Heart left ventricle (tissue), 16 donors: ENCODE measurements at regions of chr3 and their contacts with region 1.

Region 1: DNA sequence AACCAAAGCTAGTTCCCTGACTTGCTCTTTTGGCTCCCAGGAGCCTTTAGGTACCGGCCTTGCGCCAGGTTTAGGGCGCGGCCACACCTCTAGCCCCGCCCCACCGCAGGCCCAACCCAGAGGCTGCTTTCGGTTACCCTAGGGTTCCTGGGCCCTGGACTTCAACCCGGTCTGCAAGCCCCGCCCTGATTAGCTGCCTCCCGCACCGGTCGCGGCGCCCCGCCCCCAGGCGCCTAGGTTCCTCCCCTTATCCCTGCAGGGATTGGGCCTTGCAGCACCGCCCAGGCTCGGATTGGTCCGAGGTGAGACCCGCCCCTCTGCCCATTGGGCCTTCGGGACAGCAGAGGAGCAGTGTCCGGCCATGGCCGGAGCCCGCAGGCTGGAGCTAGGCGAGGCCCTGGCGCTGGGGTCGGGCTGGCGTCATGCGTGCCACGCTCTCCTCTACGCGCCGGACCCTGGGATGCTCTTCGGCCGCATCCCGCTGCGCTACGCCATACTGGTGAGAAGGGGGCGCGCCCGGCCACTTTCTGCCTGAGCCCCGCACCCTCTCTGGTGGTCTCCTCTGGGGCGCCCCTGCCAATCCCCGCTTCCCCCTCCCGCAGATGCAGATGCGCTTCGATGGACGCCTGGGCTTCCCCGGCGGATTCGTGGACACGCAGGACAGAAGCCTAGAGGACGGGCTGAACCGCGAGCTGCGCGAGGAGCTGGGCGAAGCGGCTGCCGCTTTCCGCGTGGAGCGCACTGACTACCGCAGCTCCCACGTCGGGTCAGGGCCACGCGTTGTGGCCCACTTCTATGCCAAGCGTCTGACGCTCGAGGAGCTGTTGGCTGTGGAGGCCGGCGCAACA is at the start of gene NUDT16:
- DNase-seq: peak; percentile 100
- ATAC-seq: peak; percentile 98 to 99 (median 99)
- H3K4me3 ChIP-seq: peak within 1 kb of the TSS; percentile 68 to 96 (median 86)
- H3K27ac ChIP-seq: peak within 1 kb of the TSS; percentile 63 to 94 (median 92)
- H3K4me1 ChIP-seq: peaks cover 4 to 61% (median 34%) of the 10 kb centered on the region in 12 donors
- H3K27me3 ChIP-seq: no peaks in the 10 kb centered on the region
- CTCF ChIP-seq: peak in 4 of 12 donors; percentile 8 to 25 (median 18)
- POLR2A ChIP-seq: peak; percentile 83 to 97
- total RNA-seq, gene NUDT16: 27.6 to 49.6 (median 33.9) TPM

Region 2: GRCh38 chr3:131026321-131027178 is 355.1 kb before region 1 on chr3 and contains the starts of genes ASTE1 and NEK11:
- intact Hi-C with region 1: loop called in 3 of 10 experiments (anchors 5 to 10 kb)
- DNase-seq: peak; percentile 89 to 95 (median 92)
- ATAC-seq: peak; percentile 95 to 99 (median 99)
- H3K4me3 ChIP-seq: peak within 1 kb of the TSS; percentile 58 to 90 (median 68)
- H3K27ac ChIP-seq: peak within 1 kb of the TSS; percentile 57 to 93 (median 84)
- H3K4me1 ChIP-seq: peaks cover 0 to 50% (median 20%) of the 10 kb centered on the region in 12 donors
- H3K27me3 ChIP-seq: no peaks in the 10 kb centered on the region
- CTCF ChIP-seq: no peak
- POLR2A ChIP-seq: peak in 1 of 2 donors; percentile 51
- total RNA-seq, gene ASTE1: 1.9 to 5.7 (median 3.1) TPM
- total RNA-seq, gene NEK11: 1.5 to 4.3 (median 2.1) TPM

Region 3: GRCh38 chr3:131033480-131034080 is 348.1 kb before region 1 on chr3:
- intact Hi-C with region 1: loop called in 3 of 10 experiments (anchors 5 to 10 kb)
- DNase-seq: no peak
- ATAC-seq: no peak
- H3K4me3 ChIP-seq: no peak overlapping the region
- H3K27ac ChIP-seq: no peak overlapping the region
- H3K4me1 ChIP-seq: no peaks in the 10 kb centered on the region
- H3K27me3 ChIP-seq: no peaks in the 10 kb centered on the region
- CTCF ChIP-seq: peak; percentile 49 to 73 (median 62)
- POLR2A ChIP-seq: no peak

Region 4: GRCh38 chr3:131067983-131068382 is 313.7 kb before region 1 on chr3:
- intact Hi-C with region 1: loop called in 1 of 10 experiments (anchors 10 kb)
- DNase-seq: peak in 4 of 5 donors; percentile 36 to 69 (median 46)
- ATAC-seq: peak; percentile 42 to 61 (median 54)
- H3K4me3 ChIP-seq: no peak overlapping the region
- H3K27ac ChIP-seq: no peak overlapping the region
- H3K4me1 ChIP-seq: peaks cover 0 to 14% (median 6%) of the 10 kb centered on the region in 12 donors
- H3K27me3 ChIP-seq: no peaks in the 10 kb centered on the region
- CTCF ChIP-seq: no peak
- POLR2A ChIP-seq: no peak

Region 5: GRCh38 chr3:131142580-131142979 is 239.1 kb before region 1 on chr3:
- intact Hi-C with region 1: no loop called
- DNase-seq: no peak
- ATAC-seq: no peak
- H3K4me3 ChIP-seq: no peak overlapping the region
- H3K27ac ChIP-seq: no peak overlapping the region
- H3K4me1 ChIP-seq: no peaks in the 10 kb centered on the region
- H3K27me3 ChIP-seq: no peaks in the 10 kb centered on the region
- CTCF ChIP-seq: peak in 1 of 12 donors; percentile 19
- POLR2A ChIP-seq: no peak

Region 6: DNA sequence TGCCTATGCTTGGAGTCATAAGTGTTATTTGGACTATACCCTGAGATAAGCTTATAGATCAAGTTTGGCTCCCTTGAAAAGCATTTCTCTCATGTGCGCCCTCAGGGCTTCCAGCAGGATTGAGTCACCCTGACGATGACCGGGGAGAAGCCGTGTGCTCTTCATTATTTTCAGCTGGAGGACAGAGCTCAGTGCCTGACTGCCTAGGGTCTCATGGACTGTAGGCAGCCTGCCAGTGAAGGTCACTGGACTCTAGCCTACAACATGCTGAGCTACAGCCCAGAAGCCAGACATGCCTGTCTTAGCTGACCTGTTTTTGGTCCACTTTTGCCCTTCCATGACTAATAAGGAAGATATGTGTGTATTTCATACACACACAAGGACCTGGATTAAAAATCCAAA is 31.7 kb before region 1 on chr3:
- intact Hi-C with region 1: loop called in 1 of 10 experiments (anchors 1 kb)
- DNase-seq: peak in 4 of 5 donors; percentile 33 to 67 (median 42)
- ATAC-seq: peak; percentile 73 to 88 (median 78)
- H3K4me3 ChIP-seq: peak overlapping the region in 2 of 12 donors; percentile 17 to 31
- H3K27ac ChIP-seq: peak overlapping the region; percentile 51 to 91 (median 73)
- H3K4me1 ChIP-seq: peaks cover 0 to 45% (median 16%) of the 10 kb centered on the region in 12 donors
- H3K27me3 ChIP-seq: no peaks in the 10 kb centered on the region
- CTCF ChIP-seq: no peak
- POLR2A ChIP-seq: no peak

Region 7: DNA sequence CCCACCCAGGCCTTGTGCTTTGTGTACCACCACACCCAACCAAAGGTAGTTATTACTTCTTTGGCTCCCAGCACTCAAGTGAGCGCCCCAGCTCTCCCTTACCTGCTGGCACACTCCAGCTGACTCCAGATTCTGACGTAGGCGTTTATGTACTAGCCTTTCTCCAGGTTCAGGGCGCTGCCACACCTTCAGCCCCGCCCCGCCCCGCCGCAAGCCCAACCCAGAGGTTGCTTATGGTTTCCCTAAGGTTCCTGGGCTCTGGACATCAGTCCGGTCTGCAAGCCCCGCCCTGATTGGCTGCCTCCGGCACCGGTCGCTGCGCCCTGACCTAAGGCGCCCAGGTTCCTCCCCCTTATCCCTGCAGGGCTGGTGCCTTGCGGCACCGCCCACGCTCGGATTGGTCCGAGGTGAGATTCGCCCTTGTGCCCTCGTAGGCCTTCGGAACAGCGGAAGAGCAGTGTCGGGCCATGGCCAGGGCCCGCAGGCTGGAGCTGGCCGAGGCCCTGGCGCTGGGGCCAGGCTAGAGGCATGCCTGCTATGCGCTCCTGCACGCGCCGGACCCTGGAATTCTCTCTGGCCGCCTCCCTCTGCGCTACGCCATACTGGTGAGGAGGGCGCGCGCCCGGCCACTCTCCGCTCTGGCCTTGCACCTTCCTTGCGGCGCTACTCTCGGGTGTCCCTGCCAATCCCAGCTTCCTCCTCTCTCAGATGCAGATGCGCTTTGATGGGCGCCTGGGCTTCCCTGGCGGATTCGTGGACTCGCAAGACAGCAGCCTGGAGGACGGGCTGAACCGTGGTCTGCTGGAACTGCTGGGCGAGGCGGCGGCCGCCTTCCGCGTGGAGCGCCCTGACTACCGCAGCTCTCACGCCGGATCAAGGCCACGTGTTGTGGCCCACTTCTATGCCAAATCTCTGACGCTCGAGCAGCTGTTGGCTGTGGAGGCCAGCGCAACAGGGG is 19.9 kb before region 1 on chr3:
- intact Hi-C with region 1: no loop called
- DNase-seq: peak; percentile 83 to 93 (median 91)
- ATAC-seq: peak; percentile 93 to 97 (median 96)
- H3K4me3 ChIP-seq: peak overlapping the region; percentile 39 to 69 (median 58)
- H3K27ac ChIP-seq: peak overlapping the region; percentile 75 to 93 (median 84)
- H3K4me1 ChIP-seq: peaks cover 0 to 24% (median 6%) of the 10 kb centered on the region in 12 donors
- H3K27me3 ChIP-seq: no peaks in the 10 kb centered on the region
- CTCF ChIP-seq: peak in 1 of 12 donors; percentile 4
- POLR2A ChIP-seq: peak in 1 of 2 donors; percentile 57

Region 8: GRCh38 chr3:131454501-131454900 is 72.8 kb after region 1 on chr3:
- intact Hi-C with region 1: loop called in 1 of 10 experiments (anchors 5 kb)
- DNase-seq: no peak
- ATAC-seq: peak in 1 of 4 donors; percentile 21
- H3K4me3 ChIP-seq: no peak overlapping the region
- H3K27ac ChIP-seq: no peak overlapping the region
- H3K4me1 ChIP-seq: peaks cover 0 to 26% (median 0%) of the 10 kb centered on the region in 12 donors
- H3K27me3 ChIP-seq: no peaks in the 10 kb centered on the region
- CTCF ChIP-seq: no peak
- POLR2A ChIP-seq: no peak

Region 9: DNA sequence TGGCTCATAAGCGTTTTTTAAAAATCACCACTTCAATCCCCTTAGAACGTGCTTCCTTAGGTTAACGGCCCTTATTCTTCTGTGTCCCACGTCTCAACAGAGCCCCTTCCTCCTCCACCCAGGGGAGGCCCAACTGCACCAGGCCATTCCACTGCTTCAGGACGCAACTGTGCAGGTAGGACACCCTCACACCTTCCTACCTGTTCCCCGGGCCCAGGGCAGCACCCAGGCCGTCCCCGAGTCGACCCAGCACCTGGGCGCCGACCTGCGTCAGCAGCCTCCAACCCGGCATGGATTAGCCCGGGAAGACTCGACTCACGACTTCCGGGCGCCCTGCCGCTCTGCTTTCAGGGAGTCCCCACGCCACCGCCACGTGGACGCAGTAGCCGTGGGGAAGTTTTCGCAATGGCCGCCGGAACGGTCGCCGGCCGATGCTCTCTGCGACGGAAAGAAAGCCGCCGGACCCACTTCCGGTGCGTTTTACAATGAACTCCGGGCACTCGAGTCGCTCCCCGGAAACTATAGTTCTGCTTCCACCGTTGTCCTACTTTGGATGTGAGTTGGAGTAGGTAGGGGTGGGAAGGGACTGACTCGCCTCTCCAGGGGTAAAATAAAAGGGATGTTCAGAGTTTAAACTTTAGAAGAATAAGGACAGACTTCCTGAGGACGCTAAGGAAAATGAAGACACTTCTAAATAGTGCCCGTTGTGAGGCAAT is 121.0 kb after region 1 on chr3 and contains the start of gene MRPL3:
- intact Hi-C with region 1: loop called in 5 of 10 experiments (anchors 5 to 10 kb)
- DNase-seq: peak; percentile 81 to 92 (median 88)
- ATAC-seq: peak; percentile 95 to 98 (median 98)
- H3K4me3 ChIP-seq: peak within 1 kb of the TSS; percentile 67 to 97 (median 90)
- H3K27ac ChIP-seq: peak within 1 kb of the TSS; percentile 29 to 86 (median 80)
- H3K4me1 ChIP-seq: peaks cover 0 to 39% (median 16%) of the 10 kb centered on the region in 12 donors
- H3K27me3 ChIP-seq: no peaks in the 10 kb centered on the region
- CTCF ChIP-seq: no peak
- POLR2A ChIP-seq: peak in 1 of 2 donors; percentile 57
- total RNA-seq, gene MRPL3: 50.3 to 68.7 (median 51.9) TPM